ENCODE measurements at regions of chr13 and their contacts with region 1.

Region 1: DNA sequence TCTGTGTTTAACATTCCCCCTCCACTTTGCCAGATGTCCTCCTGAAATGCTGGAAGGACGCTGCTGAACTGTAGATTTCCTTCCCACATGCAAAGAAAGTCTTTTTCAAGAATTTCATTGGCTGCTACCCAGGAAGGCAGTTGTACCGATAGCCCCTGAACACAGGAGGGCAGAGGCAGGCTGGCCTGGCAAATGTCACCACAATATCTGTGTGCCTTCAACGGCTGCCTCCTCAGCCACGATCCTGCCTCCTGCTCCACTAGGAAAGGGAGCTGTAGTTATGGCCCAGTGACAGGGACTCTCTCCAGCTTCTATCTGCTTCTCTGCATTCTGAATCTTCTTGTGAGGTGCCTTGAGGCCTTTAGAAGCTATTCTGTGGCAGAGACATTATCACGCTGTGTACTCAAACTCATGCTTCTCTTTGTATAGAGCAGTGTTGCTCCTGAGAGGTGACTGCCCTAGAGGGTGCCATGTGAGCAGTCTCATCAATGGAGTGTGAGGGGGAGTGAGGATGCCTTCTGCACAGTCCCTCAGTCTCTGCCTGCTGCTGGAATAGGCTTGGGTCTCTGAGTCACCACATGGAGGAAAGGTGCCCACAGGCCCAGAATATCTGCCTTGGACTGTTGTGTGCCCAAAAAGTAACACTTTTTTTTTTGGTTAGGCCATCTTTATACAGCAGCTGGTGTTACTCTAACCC is 279.8 kb downstream of the DNAJC15 start:
- DNase-seq: peak; percentile 84
- H3K4me3 ChIP-seq: no peak overlapping the region
- H3K27ac ChIP-seq: peak overlapping the region; percentile 27
- H3K4me1 ChIP-seq: peaks cover 70% of the 10 kb centered on the region
- H3K27me3 ChIP-seq: no peaks in the 10 kb centered on the region
- CTCF ChIP-seq: peak; percentile 69

Region 2: GRCh38 chr13:43085545-43085944 is 217.6 kb before region 1 on chr13:
- CTCF ChIA-PET with region 1: no interaction called
- POLR2A ChIA-PET with region 1: no interaction called
- intact Hi-C with region 1: loop called (anchors 1 kb)
- DNase-seq: peak; percentile 40
- H3K4me3 ChIP-seq: no peak overlapping the region
- H3K27ac ChIP-seq: no peak overlapping the region
- H3K4me1 ChIP-seq: no peaks in the 10 kb centered on the region
- H3K27me3 ChIP-seq: no peaks in the 10 kb centered on the region
- CTCF ChIP-seq: peak; percentile 62

Region 3: GRCh38 chr13:43364210-43365038 is 61.2 kb after region 1 on chr13:
- CTCF ChIA-PET with region 1: no interaction called
- POLR2A ChIA-PET with region 1: no interaction called
- intact Hi-C with region 1: loop called (anchors 5 kb)
- DNase-seq: peak; percentile 81
- H3K4me3 ChIP-seq: peak overlapping the region; percentile 15
- H3K27ac ChIP-seq: peak overlapping the region; percentile 72
- H3K4me1 ChIP-seq: peaks cover 30% of the 10 kb centered on the region
- H3K27me3 ChIP-seq: no peaks in the 10 kb centered on the region
- CTCF ChIP-seq: no peak

Region 4: DNA sequence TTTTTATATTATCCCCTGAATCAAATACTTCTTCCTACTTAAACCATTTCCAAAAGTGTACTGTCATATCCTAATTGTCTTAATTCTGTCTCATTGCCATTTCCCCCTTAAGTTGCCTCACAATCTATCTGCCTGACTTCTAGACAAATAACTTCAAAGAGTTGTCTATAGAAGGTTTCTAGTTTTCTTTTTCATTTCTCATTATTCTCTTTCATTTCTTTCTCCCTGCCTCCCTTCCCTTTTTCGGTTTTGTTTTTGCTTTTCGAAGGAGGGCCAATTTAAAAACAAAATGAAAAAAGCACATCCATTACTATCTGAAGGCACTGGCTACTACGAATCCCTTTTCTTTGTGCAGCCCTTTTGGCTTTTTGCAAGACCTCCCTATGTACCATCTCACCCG is 87.4 kb after region 1 on chr13:
- CTCF ChIA-PET with region 1: no interaction called
- POLR2A ChIA-PET with region 1: no interaction called
- intact Hi-C with region 1: loop called (anchors 10 kb)
- DNase-seq: no peak
- H3K4me3 ChIP-seq: no peak overlapping the region
- H3K27ac ChIP-seq: no peak overlapping the region
- H3K4me1 ChIP-seq: no peaks in the 10 kb centered on the region
- H3K27me3 ChIP-seq: no peaks in the 10 kb centered on the region
- CTCF ChIP-seq: no peak

Region 5: DNA sequence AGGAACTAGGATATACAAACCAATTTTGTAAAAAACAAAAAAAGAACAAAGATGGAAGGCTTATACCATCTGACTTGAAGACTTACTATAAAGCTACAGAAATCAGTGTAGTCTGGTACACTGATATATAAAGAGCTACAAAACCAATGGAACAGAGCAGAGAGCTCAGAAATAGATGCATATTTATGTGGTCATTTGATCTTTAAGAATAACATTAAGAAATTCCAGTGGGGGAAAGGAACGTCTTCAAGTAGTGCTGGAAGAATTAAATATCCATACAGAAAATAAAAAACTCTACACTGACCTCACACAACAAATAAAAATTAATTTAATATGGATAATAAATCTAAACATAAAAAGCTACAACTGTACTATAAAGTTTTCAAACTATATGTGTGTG is 166.6 kb after region 1 on chr13:
- CTCF ChIA-PET with region 1: no interaction called
- POLR2A ChIA-PET with region 1: no interaction called
- intact Hi-C with region 1: loop called (anchors 10 kb)
- DNase-seq: no peak
- H3K4me3 ChIP-seq: no peak overlapping the region
- H3K27ac ChIP-seq: no peak overlapping the region
- H3K4me1 ChIP-seq: no peaks in the 10 kb centered on the region
- H3K27me3 ChIP-seq: no peaks in the 10 kb centered on the region
- CTCF ChIP-seq: no peak

Region 6: DNA sequence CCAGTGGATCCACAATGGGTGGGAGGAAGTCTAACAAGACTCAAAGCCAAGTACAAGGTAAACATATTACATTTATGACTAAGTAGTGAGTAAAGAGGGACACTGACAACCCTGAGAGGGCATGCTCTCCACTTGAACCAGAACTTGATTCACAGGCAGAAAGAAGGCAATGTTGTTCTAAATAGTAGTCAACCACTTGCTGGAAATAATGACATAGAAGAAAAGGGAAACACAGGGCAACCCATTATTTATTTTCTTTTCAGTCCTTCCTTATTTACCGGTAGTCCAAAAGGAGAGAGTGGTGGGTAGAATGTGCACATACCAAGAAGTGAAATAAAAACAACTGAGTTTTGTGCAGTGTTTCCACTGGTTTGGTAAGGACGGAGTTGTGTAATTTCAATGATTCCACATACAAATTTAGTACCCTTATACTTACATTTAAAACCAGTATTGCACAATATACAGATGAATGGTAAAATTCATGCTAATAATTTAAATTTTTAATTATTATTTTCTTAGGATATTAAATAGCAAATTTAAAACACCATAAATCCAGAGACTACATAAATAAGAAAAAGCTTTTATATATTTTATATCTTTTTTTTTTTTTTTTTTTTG is 417.7 kb after region 1 on chr13:
- CTCF ChIA-PET with region 1: no interaction called
- POLR2A ChIA-PET with region 1: no interaction called
- intact Hi-C with region 1: no loop called
- DNase-seq: no peak
- H3K4me3 ChIP-seq: no peak overlapping the region
- H3K27ac ChIP-seq: no peak overlapping the region
- H3K4me1 ChIP-seq: no peaks in the 10 kb centered on the region
- H3K27me3 ChIP-seq: no peaks in the 10 kb centered on the region
- CTCF ChIP-seq: no peak

Region 7: GRCh38 chr13:43786773-43787517 is 483.8 kb after region 1 on chr13 and contains the start of gene ENOX1:
- CTCF ChIA-PET with region 1: interaction called, 3 read pairs
- POLR2A ChIA-PET with region 1: interaction called, 6 read pairs
- intact Hi-C with region 1: loop called (anchors 5 kb)
- DNase-seq: peak; percentile 91
- H3K4me3 ChIP-seq: peak within 1 kb of the TSS; percentile 68
- H3K27ac ChIP-seq: no peak within 1 kb of the TSS
- H3K4me1 ChIP-seq: peaks cover 4% of the 10 kb centered on the region
- H3K27me3 ChIP-seq: no peaks in the 10 kb centered on the region
- CTCF ChIP-seq: peak; percentile 38; the same call in 1 of the 2 replicates
- total RNA-seq, gene ENOX1: 4.4 and 4.5 TPM in 2 replicates

Measured in A673 (cell line).